CD4-positive, alpha-beta memory T cell (primary cell): ENCODE measurements at regions of chr11 and their contacts with region 1.

Region 1: GRCh38 chr11:17538731-17539130 is 5.5 kb downstream of the USH1C start:
- DNase-seq: no peak
- H3K4me3 ChIP-seq: no peak overlapping the region
- H3K4me3 Mint-ChIP-seq: no peak overlapping the region
- H3K27ac ChIP-seq: no peak overlapping the region
- H3K27ac Mint-ChIP-seq: peak overlapping the region in 1 of 7 donors; percentile 64
- H3K4me1 ChIP-seq: no peaks in the 10 kb centered on the region
- H3K4me1 Mint-ChIP-seq: peaks cover 0 to 3% (median 1%) of the 10 kb centered on the region in 4 donors
- H3K27me3 ChIP-seq: no peaks in the 10 kb centered on the region
- H3K27me3 Mint-ChIP-seq: peaks cover 0 to 6% of the 10 kb centered on the region in 2 donors

Region 2: DNA sequence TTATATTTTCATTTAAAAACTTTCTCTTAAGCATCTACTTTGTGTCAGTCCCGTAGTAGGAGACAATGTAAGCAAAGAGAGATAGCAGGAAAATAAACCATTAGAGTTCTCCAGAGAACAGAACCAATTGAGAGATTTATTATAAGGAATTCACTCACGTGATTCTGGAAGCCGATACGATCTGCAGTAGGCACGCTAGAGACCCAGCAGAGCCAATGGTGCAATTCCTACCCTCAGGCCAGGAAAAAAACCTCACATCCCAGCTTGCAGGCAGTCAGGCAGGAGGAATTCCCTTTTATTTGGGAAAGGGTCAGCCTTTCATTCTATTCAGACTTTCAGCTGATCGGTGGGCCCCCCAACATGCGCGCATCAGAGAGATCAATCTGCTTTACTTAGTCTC is 517.2 kb before region 1 on chr11:
- CTCF ChIA-PET with region 1: no interaction called
- POLR2A ChIA-PET with region 1: no interaction called
- intact Hi-C with region 1: no loop called
- DNase-seq: no peak
- H3K4me3 ChIP-seq: no peak overlapping the region
- H3K4me3 Mint-ChIP-seq: no peak overlapping the region
- H3K27ac ChIP-seq: no peak overlapping the region
- H3K27ac Mint-ChIP-seq: no peak overlapping the region
- H3K4me1 ChIP-seq: no peaks in the 10 kb centered on the region
- H3K4me1 Mint-ChIP-seq: no peaks in the 10 kb centered on the region
- H3K27me3 ChIP-seq: no peaks in the 10 kb centered on the region
- H3K27me3 Mint-ChIP-seq: no peaks in the 10 kb centered on the region

Region 3: DNA sequence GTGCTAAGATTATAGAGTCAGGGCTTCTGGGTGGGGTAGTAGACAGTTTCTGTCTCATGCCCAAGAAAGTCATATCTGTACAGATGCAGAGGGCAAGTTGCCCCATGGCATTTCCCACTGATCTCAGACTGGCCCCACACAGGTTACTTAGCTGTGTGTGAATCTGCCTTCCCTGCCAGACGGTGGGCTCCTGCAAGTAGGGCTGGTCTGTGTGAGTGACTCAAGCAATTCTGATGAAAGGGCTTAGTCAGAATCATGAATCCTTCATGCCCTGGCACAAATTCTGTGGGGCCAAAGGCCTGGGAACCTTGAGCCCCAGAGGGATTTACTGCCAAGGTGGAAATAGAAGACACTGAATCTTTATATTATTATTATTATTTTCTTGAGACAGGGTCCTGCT is 24.9 kb before region 1 on chr11:
- CTCF ChIA-PET with region 1: no interaction called
- POLR2A ChIA-PET with region 1: no interaction called
- intact Hi-C with region 1: no loop called
- DNase-seq: no peak
- H3K4me3 ChIP-seq: no peak overlapping the region
- H3K4me3 Mint-ChIP-seq: no peak overlapping the region
- H3K27ac ChIP-seq: no peak overlapping the region
- H3K27ac Mint-ChIP-seq: no peak overlapping the region
- H3K4me1 ChIP-seq: no peaks in the 10 kb centered on the region
- H3K4me1 Mint-ChIP-seq: no peaks in the 10 kb centered on the region
- H3K27me3 ChIP-seq: no peaks in the 10 kb centered on the region
- H3K27me3 Mint-ChIP-seq: peaks cover 5 to 10% of the 10 kb centered on the region in 2 donors

Region 4: GRCh38 chr11:17528181-17528691 is 10.5 kb before region 1 on chr11:
- CTCF ChIA-PET with region 1: interaction called, 11 read pairs
- POLR2A ChIA-PET with region 1: no interaction called
- intact Hi-C with region 1: no loop called
- DNase-seq: peak in 4 of 5 donors; percentile 21 to 31 (median 23)
- H3K4me3 ChIP-seq: no peak overlapping the region
- H3K4me3 Mint-ChIP-seq: no peak overlapping the region
- H3K27ac ChIP-seq: no peak overlapping the region
- H3K27ac Mint-ChIP-seq: no peak overlapping the region
- H3K4me1 ChIP-seq: no peaks in the 10 kb centered on the region
- H3K4me1 Mint-ChIP-seq: no peaks in the 10 kb centered on the region
- H3K27me3 ChIP-seq: no peaks in the 10 kb centered on the region
- H3K27me3 Mint-ChIP-seq: peaks cover 4 to 7% of the 10 kb centered on the region in 2 donors

Region 5: GRCh38 chr11:17563248-17563647 is 24.5 kb after region 1 on chr11:
- CTCF ChIA-PET with region 1: no interaction called
- POLR2A ChIA-PET with region 1: no interaction called
- intact Hi-C with region 1: no loop called
- DNase-seq: no peak
- H3K4me3 ChIP-seq: no peak overlapping the region
- H3K4me3 Mint-ChIP-seq: no peak overlapping the region
- H3K27ac ChIP-seq: no peak overlapping the region
- H3K27ac Mint-ChIP-seq: no peak overlapping the region
- H3K4me1 ChIP-seq: no peaks in the 10 kb centered on the region
- H3K4me1 Mint-ChIP-seq: peaks cover 0 to 2% (median 0%) of the 10 kb centered on the region in 4 donors
- H3K27me3 ChIP-seq: no peaks in the 10 kb centered on the region
- H3K27me3 Mint-ChIP-seq: peaks cover 5 to 8% of the 10 kb centered on the region in 2 donors